CD8-positive, alpha-beta T cell (primary cell): ENCODE measurements at regions of chr1 and their contacts with region 1.

Region 1: DNA sequence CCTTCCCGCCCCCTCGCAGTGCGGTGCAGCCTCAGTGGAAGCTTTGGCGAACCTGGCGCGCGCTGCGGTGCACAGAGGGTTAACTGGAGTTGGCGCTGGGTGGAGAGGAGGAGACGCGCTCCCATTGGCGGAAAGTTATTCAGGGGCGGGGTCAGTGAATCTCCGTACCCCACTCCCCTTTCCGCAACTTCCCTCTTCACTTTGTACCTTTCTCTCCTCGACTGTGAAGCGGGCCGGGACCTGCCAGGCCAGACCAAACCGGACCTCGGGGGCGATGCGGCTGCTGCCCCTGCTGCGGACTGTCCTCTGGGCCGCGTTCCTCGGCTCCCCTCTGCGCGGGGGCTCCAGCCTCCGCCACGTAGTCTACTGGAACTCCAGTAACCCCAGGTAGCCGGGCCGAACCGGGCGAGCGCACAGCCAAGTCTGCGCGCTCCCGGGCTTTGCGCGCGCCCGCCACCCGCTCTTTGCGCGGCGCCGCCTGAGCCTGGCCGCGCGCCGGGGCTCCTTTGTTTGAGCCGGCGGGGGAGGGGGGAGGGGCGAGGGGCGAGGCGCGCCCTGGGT is at the start of gene EFNA4:
- DNase-seq: peak; percentile 59 to 92 (median 83)
- ATAC-seq: peak; percentile 87
- H3K4me3 ChIP-seq: peak within 1 kb of the TSS; percentile 79 to 85
- H3K4me3 Mint-ChIP-seq: peak within 1 kb of the TSS; percentile 88
- H3K27ac ChIP-seq: peak within 1 kb of the TSS in 1 of 2 experiments; percentile 34
- H3K27ac Mint-ChIP-seq: peak within 1 kb of the TSS; percentile 77
- H3K4me1 ChIP-seq: peaks cover 33% of the 10 kb centered on the region
- H3K4me1 Mint-ChIP-seq: peaks cover 36% of the 10 kb centered on the region
- H3K27me3 ChIP-seq: no peaks in the 10 kb centered on the region
- H3K27me3 Mint-ChIP-seq: no peaks in the 10 kb centered on the region
- CTCF ChIP-seq: no peak
- total RNA-seq, gene EFNA4: 1.4 to 1.8 TPM

Region 2: GRCh38 chr1:154669464-154670282 is 394.0 kb before region 1 on chr1:
- CTCF ChIA-PET with region 1: interaction called, 5 read pairs
- POLR2A ChIA-PET with region 1: no interaction called
- intact Hi-C with region 1: loop called (anchors 1 kb)
- DNase-seq: peak; percentile 48 to 86 (median 74)
- ATAC-seq: peak; percentile 100
- H3K4me3 ChIP-seq: no peak overlapping the region
- H3K4me3 Mint-ChIP-seq: no peak overlapping the region
- H3K27ac ChIP-seq: no peak overlapping the region
- H3K27ac Mint-ChIP-seq: no peak overlapping the region
- H3K4me1 ChIP-seq: peaks cover 3% of the 10 kb centered on the region
- H3K4me1 Mint-ChIP-seq: no peaks in the 10 kb centered on the region
- H3K27me3 ChIP-seq: no peaks in the 10 kb centered on the region
- H3K27me3 Mint-ChIP-seq: no peaks in the 10 kb centered on the region
- CTCF ChIP-seq: peak; percentile 80

Region 3: GRCh38 chr1:154955718-154956543 is 107.7 kb before region 1 on chr1 and contains the start of gene PBXIP1:
- CTCF ChIA-PET with region 1: interaction called, 5 read pairs
- POLR2A ChIA-PET with region 1: no interaction called
- intact Hi-C with region 1: loop called (anchors 2 to 5 kb)
- DNase-seq: peak; percentile 65 to 96 (median 84)
- ATAC-seq: peak; percentile 40
- H3K4me3 ChIP-seq: peak within 1 kb of the TSS; percentile 71 to 76
- H3K4me3 Mint-ChIP-seq: peak within 1 kb of the TSS; percentile 99
- H3K27ac ChIP-seq: peak within 1 kb of the TSS; percentile 98
- H3K27ac Mint-ChIP-seq: peak within 1 kb of the TSS; percentile 99
- H3K4me1 ChIP-seq: peaks cover 60% of the 10 kb centered on the region
- H3K4me1 Mint-ChIP-seq: peaks cover 76% of the 10 kb centered on the region
- H3K27me3 ChIP-seq: no peaks in the 10 kb centered on the region
- H3K27me3 Mint-ChIP-seq: no peaks in the 10 kb centered on the region
- CTCF ChIP-seq: no peak
- total RNA-seq, gene PBXIP1: 315 to 319 TPM

Region 4: DNA sequence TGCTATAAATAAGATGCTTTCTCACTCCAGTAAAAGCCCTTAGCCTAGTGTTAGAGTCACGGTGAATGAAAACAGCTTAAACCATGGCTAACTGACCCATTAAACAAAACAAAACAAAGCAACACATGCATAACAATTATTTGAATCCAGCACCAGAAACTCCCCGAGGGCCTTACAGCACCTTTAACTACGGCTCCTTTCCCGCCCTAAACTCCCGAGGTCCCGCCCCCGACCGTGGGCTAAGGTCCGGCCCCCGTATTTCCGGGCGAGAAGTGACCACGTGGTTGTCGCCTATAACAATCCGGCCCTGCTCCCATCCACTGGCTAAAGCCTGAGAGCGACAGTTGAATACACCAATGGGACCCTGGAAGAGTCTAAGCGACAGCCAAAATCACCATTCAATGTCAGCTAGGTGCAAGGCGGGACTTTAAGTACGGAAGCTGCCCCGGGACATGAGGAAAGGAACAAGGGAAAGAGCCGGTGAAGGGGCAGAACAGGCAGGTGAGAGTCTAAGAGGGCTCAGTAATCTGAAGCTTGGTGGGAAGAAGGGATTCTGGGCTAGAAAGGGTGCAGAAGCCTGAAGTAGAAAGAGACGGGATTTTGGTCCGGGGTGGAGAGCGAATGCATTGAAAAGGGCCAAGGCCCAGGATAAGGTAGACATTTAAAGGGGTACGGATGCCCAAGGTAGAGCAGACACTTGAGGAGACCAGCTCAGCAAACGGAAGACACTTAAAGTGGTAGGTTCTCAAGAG is 80.6 kb before region 1 on chr1 and contains the start of gene FLAD1:
- CTCF ChIA-PET with region 1: no interaction called
- POLR2A ChIA-PET with region 1: no interaction called
- intact Hi-C with region 1: loop called in 1 of 2 experiments (anchors 1 kb)
- DNase-seq: peak; percentile 86 to 99 (median 94)
- ATAC-seq: peak; percentile 98
- H3K4me3 ChIP-seq: peak within 1 kb of the TSS; percentile 57 to 86
- H3K4me3 Mint-ChIP-seq: no peak within 1 kb of the TSS
- H3K27ac ChIP-seq: peak within 1 kb of the TSS; percentile 51 to 82
- H3K27ac Mint-ChIP-seq: no peak within 1 kb of the TSS
- H3K4me1 ChIP-seq: peaks cover 12% of the 10 kb centered on the region
- H3K4me1 Mint-ChIP-seq: peaks cover 12% of the 10 kb centered on the region
- H3K27me3 ChIP-seq: no peaks in the 10 kb centered on the region
- H3K27me3 Mint-ChIP-seq: no peaks in the 10 kb centered on the region
- CTCF ChIP-seq: no peak
- total RNA-seq, gene FLAD1: 17.4 to 19.0 TPM

Region 5: DNA sequence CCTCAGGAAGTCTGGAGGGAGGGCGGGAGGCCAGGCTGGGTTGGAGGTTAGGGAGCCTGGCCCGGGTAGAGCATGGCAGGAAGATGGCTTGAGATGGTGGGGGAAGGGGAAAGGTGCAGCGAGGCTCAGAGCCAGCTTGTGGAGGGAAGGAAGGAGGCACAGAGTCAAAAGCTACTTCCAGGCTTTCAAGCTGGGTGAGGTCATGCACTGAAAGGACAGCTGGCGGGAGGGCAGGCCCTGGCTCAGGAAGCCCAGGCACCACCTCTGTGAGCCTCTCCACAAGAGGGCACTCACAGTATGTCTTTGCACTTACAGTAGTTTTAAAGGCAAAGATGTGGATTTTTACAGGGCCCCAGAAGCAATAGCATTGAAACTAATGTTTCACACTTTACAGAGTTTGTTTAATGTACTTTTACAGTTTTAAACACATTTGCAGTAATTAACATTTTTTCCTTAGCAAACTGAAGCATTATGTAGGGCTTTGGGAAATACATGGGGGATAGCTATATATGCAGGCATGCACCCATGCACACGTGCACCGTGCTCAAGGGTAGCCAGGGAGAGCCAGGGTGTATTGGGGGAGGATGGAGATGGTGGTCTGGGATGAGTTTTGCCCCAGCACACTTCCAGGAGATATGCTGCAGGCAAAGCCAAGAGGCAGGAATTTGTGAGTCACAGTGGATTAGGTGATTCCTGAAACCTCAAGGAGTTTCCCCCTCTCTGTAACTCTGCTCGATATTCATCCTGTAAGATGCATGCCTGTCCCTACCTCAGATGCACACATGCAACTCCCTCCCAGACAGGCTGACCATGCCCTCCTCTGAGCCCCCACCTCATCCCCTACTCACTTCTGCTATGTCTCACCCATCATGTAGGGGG is 18.6 kb before region 1 on chr1:
- CTCF ChIA-PET with region 1: interaction called, 528 read pairs
- POLR2A ChIA-PET with region 1: interaction called, 8 read pairs
- intact Hi-C with region 1: loop called (anchors 1 kb)
- DNase-seq: peak in 8 of 9 experiments; percentile 42 to 80 (median 64)
- ATAC-seq: peak; percentile 94
- H3K4me3 ChIP-seq: no peak overlapping the region
- H3K4me3 Mint-ChIP-seq: no peak overlapping the region
- H3K27ac ChIP-seq: no peak overlapping the region
- H3K27ac Mint-ChIP-seq: no peak overlapping the region
- H3K4me1 ChIP-seq: no peaks in the 10 kb centered on the region
- H3K4me1 Mint-ChIP-seq: peaks cover 4% of the 10 kb centered on the region
- H3K27me3 ChIP-seq: no peaks in the 10 kb centered on the region
- H3K27me3 Mint-ChIP-seq: peaks cover 3% of the 10 kb centered on the region
- CTCF ChIP-seq: peak; percentile 64

Region 6: DNA sequence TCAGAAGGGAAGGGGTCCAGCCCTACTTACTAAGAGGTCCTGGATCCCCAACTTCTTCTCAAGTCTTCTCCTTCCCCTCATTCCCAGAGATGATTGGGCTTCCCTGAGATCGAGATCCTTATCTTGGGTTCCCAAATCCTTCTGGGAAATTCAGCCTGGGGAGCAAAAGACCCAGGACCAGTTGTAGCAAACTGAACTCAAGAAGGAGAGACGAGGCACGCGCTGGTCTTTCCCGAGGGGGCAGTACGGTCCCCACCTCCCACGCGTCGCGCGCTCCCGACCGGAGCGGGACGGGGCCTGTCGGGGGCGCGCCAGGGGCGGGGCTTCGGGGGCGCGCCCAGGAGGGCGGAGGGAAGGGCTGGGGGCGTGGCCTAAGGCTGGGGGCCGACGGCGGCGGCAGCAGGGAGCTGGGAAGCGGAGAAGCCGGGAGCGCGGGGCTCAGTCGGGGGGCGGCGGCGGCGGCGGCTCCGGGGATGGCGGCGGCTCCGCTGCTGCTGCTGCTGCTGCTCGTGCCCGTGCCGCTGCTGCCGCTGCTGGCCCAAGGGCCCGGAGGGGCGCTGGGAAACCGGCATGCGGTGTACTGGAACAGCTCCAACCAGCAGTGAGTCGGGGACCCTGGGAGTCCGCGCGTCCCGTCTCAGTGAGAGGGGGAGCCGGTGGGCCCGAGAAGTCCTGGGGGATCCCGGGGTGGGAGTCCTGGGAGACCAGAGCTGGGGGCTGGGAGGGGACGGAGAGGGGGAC is 15.0 kb after region 1 on chr1 and contains the start of gene EFNA3:
- CTCF ChIA-PET with region 1: interaction called, 219 read pairs
- POLR2A ChIA-PET with region 1: interaction called, 4 read pairs
- intact Hi-C with region 1: no loop called
- DNase-seq: peak in 8 of 9 experiments; percentile 41 to 76 (median 64)
- ATAC-seq: peak; percentile 43
- H3K4me3 ChIP-seq: peak within 1 kb of the TSS; percentile 29 to 37
- H3K4me3 Mint-ChIP-seq: peak within 1 kb of the TSS; percentile 69
- H3K27ac ChIP-seq: no peak within 1 kb of the TSS
- H3K27ac Mint-ChIP-seq: peak within 1 kb of the TSS; percentile 5
- H3K4me1 ChIP-seq: peaks cover 52% of the 10 kb centered on the region
- H3K4me1 Mint-ChIP-seq: peaks cover 36% of the 10 kb centered on the region
- H3K27me3 ChIP-seq: peaks cover 39 to 46% of the 10 kb centered on the region in 2 experiments
- H3K27me3 Mint-ChIP-seq: peaks cover 26% of the 10 kb centered on the region
- CTCF ChIP-seq: no peak
- total RNA-seq, gene EFNA3: 0.46 to 0.69 TPM

Region 7: GRCh38 chr1:155091071-155091709 is 27.6 kb after region 1 on chr1:
- CTCF ChIA-PET with region 1: interaction called, 219 read pairs
- POLR2A ChIA-PET with region 1: no interaction called
- intact Hi-C with region 1: no loop called
- DNase-seq: peak; percentile 52 to 89 (median 79)
- ATAC-seq: peak; percentile 92
- H3K4me3 ChIP-seq: no peak overlapping the region
- H3K4me3 Mint-ChIP-seq: no peak overlapping the region
- H3K27ac ChIP-seq: no peak overlapping the region
- H3K27ac Mint-ChIP-seq: no peak overlapping the region
- H3K4me1 ChIP-seq: peaks cover 11% of the 10 kb centered on the region
- H3K4me1 Mint-ChIP-seq: peaks cover 8% of the 10 kb centered on the region
- H3K27me3 ChIP-seq: no peaks in the 10 kb centered on the region
- H3K27me3 Mint-ChIP-seq: peaks cover 3% of the 10 kb centered on the region
- CTCF ChIP-seq: peak; percentile 94